ENCODE measurements at regions of chr5 and their contacts with region 1.

Region 1: DNA sequence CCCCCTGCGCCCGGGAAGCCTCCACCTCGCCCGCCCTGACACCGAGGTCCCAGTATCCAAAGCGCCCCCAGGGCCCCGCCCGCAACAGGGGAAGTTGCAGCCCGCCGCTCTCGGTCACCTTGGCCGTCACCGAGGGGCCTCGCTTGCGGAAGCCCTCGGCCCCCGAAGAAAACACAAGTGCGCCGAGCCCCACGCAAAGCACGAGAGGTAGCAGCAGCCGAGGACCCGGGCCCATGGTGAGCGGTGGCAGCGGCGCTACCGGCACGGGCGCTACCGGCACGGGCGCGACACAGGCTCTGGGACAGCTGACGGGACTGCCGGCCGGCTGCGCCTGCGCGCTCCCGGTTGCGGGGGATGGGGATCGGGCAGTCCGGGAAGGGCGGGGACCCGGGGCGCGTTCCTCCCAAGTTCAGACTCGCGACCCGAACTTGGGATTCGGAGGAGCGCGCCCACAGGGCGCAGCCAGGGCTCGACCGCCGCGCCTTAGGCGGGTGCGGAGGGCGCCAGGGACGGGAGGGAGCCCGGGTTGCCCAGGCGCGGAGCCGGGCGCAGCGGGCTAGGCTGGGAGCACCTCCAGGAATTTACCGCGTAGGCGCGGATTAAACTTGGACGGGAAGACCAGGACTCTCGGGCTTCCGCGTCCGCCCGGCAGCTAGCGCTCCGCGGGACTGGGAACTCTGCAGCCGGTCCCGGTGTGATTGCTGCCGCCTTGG is at the start of gene PPIC:
- DNase-seq: peak; percentile 93
- H3K27ac ChIP-seq: peak within 1 kb of the TSS; percentile 79
- CTCF ChIP-seq: no peak

Region 2: GRCh38 chr5:122985954-122986721 is 50.4 kb before region 1 on chr5:
- CTCF ChIA-PET with region 1: no interaction called
- POLR2A ChIA-PET with region 1: no interaction called
- DNase-seq: no peak
- H3K27ac ChIP-seq: no peak overlapping the region
- CTCF ChIP-seq: no peak

Region 3: DNA sequence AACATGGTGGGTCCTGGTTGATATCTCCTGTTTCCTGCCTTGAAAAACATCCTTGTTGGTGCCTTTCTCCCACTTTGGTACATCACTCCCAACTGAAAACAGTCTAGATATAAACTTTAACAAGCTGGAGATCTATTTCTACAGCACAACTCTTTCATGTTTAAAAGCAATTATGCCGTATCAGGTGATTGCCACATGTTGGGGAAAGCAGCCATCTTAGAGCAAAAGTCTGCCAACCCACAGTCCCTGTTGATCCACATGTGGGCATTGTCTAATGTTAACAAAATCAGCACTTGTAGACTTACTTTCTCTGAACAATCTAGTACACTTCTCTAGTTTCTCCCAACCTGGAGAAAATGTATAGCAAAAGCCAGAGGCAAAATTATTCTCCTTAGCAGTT is 156.6 kb after region 1 on chr5:
- CTCF ChIA-PET with region 1: no interaction called
- POLR2A ChIA-PET with region 1: interaction called, 10 read pairs
- DNase-seq: no peak
- H3K27ac ChIP-seq: no peak overlapping the region
- CTCF ChIP-seq: no peak

Measured in RWPE1 (cell line).